Naive thymus-derived CD4-positive, alpha-beta T cell (primary cell): ENCODE measurements at regions of chr10 and their contacts with region 1.

Region 1: GRCh38 chr10:6607778-6608177 is 27.7 kb upstream of the PRKCQ start:
- DNase-seq: no peak
- ATAC-seq: no peak
- H3K4me3 ChIP-seq: no peak overlapping the region
- H3K4me3 Mint-ChIP-seq: peak overlapping the region in 6 of 10 donors; percentile 4 to 76 (median 62)
- H3K27ac ChIP-seq: peak overlapping the region; percentile 59
- H3K27ac Mint-ChIP-seq: peak overlapping the region; percentile 89 to 98 (median 95)
- H3K4me1 ChIP-seq: peaks cover 24 to 33% of the 10 kb centered on the region in 2 donors
- H3K4me1 Mint-ChIP-seq: peaks cover 28 to 85% (median 79%) of the 10 kb centered on the region in 7 donors
- H3K27me3 ChIP-seq: no peaks in the 10 kb centered on the region
- H3K27me3 Mint-ChIP-seq: no peaks in the 10 kb centered on the region

Region 2: GRCh38 chr10:5354068-5354467 is 1253.7 kb before region 1 on chr10:
- CTCF ChIA-PET with region 1: no interaction called
- POLR2A ChIA-PET with region 1: no interaction called
- intact Hi-C with region 1: no loop called
- DNase-seq: no peak
- ATAC-seq: no peak
- H3K4me3 ChIP-seq: no peak overlapping the region
- H3K4me3 Mint-ChIP-seq: no peak overlapping the region
- H3K27ac ChIP-seq: no peak overlapping the region
- H3K27ac Mint-ChIP-seq: no peak overlapping the region
- H3K4me1 ChIP-seq: no peaks in the 10 kb centered on the region
- H3K4me1 Mint-ChIP-seq: peaks cover 0 to 13% (median 7%) of the 10 kb centered on the region in 7 donors
- H3K27me3 ChIP-seq: peaks cover 0 to 3% of the 10 kb centered on the region in 2 donors
- H3K27me3 Mint-ChIP-seq: peaks cover 0 to 34% (median 3%) of the 10 kb centered on the region in 5 donors

Region 3: GRCh38 chr10:6313107-6313895 is 294.5 kb before region 1 on chr10:
- CTCF ChIA-PET with region 1: no interaction called
- POLR2A ChIA-PET with region 1: no interaction called
- intact Hi-C with region 1: no loop called
- DNase-seq: no peak
- ATAC-seq: no peak
- H3K4me3 ChIP-seq: no peak overlapping the region
- H3K4me3 Mint-ChIP-seq: no peak overlapping the region
- H3K27ac ChIP-seq: no peak overlapping the region
- H3K27ac Mint-ChIP-seq: peak overlapping the region in 1 of 9 donors; percentile 54
- H3K4me1 ChIP-seq: no peaks in the 10 kb centered on the region
- H3K4me1 Mint-ChIP-seq: peaks cover 0 to 21% (median 0%) of the 10 kb centered on the region in 7 donors
- H3K27me3 ChIP-seq: no peaks in the 10 kb centered on the region
- H3K27me3 Mint-ChIP-seq: no peaks in the 10 kb centered on the region

Region 4: GRCh38 chr10:6593241-6593671 is 14.5 kb before region 1 on chr10:
- CTCF ChIA-PET with region 1: interaction called, 6 read pairs
- POLR2A ChIA-PET with region 1: interaction called, 27 read pairs
- intact Hi-C with region 1: loop called (anchors 1 to 2 kb)
- DNase-seq: peak in 5 of 9 donors; percentile 29 to 76 (median 61)
- ATAC-seq: peak; percentile 73
- H3K4me3 ChIP-seq: peak overlapping the region; percentile 38
- H3K4me3 Mint-ChIP-seq: peak overlapping the region; percentile 53 to 97 (median 80)
- H3K27ac ChIP-seq: peak overlapping the region; percentile 94
- H3K27ac Mint-ChIP-seq: peak overlapping the region; percentile 96 to 99 (median 97)
- H3K4me1 ChIP-seq: peaks cover 34 to 95% of the 10 kb centered on the region in 2 donors
- H3K4me1 Mint-ChIP-seq: peaks cover 45 to 100% (median 98%) of the 10 kb centered on the region in 7 donors
- H3K27me3 ChIP-seq: no peaks in the 10 kb centered on the region
- H3K27me3 Mint-ChIP-seq: no peaks in the 10 kb centered on the region

Region 5: DNA sequence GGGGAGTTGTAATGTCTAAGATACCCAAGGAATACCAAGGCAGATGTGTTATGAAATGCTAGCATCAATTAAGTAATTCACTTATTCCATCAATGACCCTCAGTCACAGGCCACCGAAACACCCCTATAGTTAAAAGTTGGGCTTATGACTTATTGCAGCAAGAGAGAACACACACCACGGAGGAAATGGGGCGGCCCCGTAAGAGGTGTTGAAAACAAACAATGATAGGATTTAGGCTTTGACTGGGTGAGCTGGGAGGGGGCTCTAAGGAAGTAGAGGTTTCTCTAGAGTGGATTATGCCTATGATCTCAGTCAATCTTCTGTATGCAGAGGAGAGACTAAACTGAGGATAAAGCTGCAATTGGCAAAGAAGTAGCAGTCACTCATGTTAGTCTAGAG is 17.6 kb after region 1 on chr10:
- CTCF ChIA-PET with region 1: interaction called, 3 read pairs
- POLR2A ChIA-PET with region 1: interaction called, 6 read pairs
- intact Hi-C with region 1: loop called in 1 of 2 experiments (anchors 2 kb)
- DNase-seq: peak in 2 of 9 donors; percentile 12 to 40
- ATAC-seq: no peak
- H3K4me3 ChIP-seq: no peak overlapping the region
- H3K4me3 Mint-ChIP-seq: peak overlapping the region in 3 of 10 donors; percentile 37 to 46 (median 45)
- H3K27ac ChIP-seq: no peak overlapping the region
- H3K27ac Mint-ChIP-seq: peak overlapping the region in 8 of 9 donors; percentile 9 to 79 (median 46)
- H3K4me1 ChIP-seq: peaks cover 0 to 6% of the 10 kb centered on the region in 2 donors
- H3K4me1 Mint-ChIP-seq: peaks cover 0 to 23% (median 11%) of the 10 kb centered on the region in 7 donors
- H3K27me3 ChIP-seq: no peaks in the 10 kb centered on the region
- H3K27me3 Mint-ChIP-seq: no peaks in the 10 kb centered on the region

Region 6: GRCh38 chr10:6642876-6643275 is 35.1 kb after region 1 on chr10:
- CTCF ChIA-PET with region 1: interaction called, 5 read pairs
- POLR2A ChIA-PET with region 1: interaction called, 10 read pairs
- intact Hi-C with region 1: loop called in 1 of 2 experiments (anchors 2 kb)
- DNase-seq: no peak
- ATAC-seq: no peak
- H3K4me3 ChIP-seq: no peak overlapping the region
- H3K4me3 Mint-ChIP-seq: peak overlapping the region in 5 of 10 donors; percentile 9 to 66 (median 13)
- H3K27ac ChIP-seq: no peak overlapping the region
- H3K27ac Mint-ChIP-seq: peak overlapping the region in 7 of 9 donors; percentile 3 to 81 (median 56)
- H3K4me1 ChIP-seq: peaks cover 5 to 12% of the 10 kb centered on the region in 2 donors
- H3K4me1 Mint-ChIP-seq: peaks cover 0 to 48% (median 35%) of the 10 kb centered on the region in 7 donors
- H3K27me3 ChIP-seq: no peaks in the 10 kb centered on the region
- H3K27me3 Mint-ChIP-seq: no peaks in the 10 kb centered on the region

Region 7: GRCh38 chr10:6647811-6648526 is 40.2 kb after region 1 on chr10:
- CTCF ChIA-PET with region 1: interaction called, 5 read pairs
- POLR2A ChIA-PET with region 1: interaction called, 10 read pairs
- intact Hi-C with region 1: loop called in 1 of 2 experiments (anchors 2 kb)
- DNase-seq: peak; percentile 37 to 75 (median 64)
- ATAC-seq: peak; percentile 94
- H3K4me3 ChIP-seq: no peak overlapping the region
- H3K4me3 Mint-ChIP-seq: peak overlapping the region in 1 of 10 donors; percentile 32
- H3K27ac ChIP-seq: no peak overlapping the region
- H3K27ac Mint-ChIP-seq: peak overlapping the region in 3 of 9 donors; percentile 19 to 67 (median 38)
- H3K4me1 ChIP-seq: peaks cover 5 to 10% of the 10 kb centered on the region in 2 donors
- H3K4me1 Mint-ChIP-seq: peaks cover 0 to 46% (median 27%) of the 10 kb centered on the region in 7 donors
- H3K27me3 ChIP-seq: no peaks in the 10 kb centered on the region
- H3K27me3 Mint-ChIP-seq: no peaks in the 10 kb centered on the region

Region 8: GRCh38 chr10:6953156-6953844 is 345.5 kb after region 1 on chr10:
- CTCF ChIA-PET with region 1: no interaction called
- POLR2A ChIA-PET with region 1: no interaction called
- intact Hi-C with region 1: no loop called
- DNase-seq: no peak
- ATAC-seq: no peak
- H3K4me3 ChIP-seq: no peak overlapping the region
- H3K4me3 Mint-ChIP-seq: no peak overlapping the region
- H3K27ac ChIP-seq: no peak overlapping the region
- H3K27ac Mint-ChIP-seq: no peak overlapping the region
- H3K4me1 ChIP-seq: peaks cover 4 to 10% of the 10 kb centered on the region in 2 donors
- H3K4me1 Mint-ChIP-seq: peaks cover 0 to 8% (median 4%) of the 10 kb centered on the region in 7 donors
- H3K27me3 ChIP-seq: no peaks in the 10 kb centered on the region
- H3K27me3 Mint-ChIP-seq: no peaks in the 10 kb centered on the region